Mammary epithelial cell (primary cell): ENCODE measurements at regions of chr3 and their contacts with region 1.

Region 1: GRCh38 chr3:13479581-13480339 is at the start of gene HDAC11:
- DNase-seq: peak; percentile 94
- H3K4me3 ChIP-seq: peak within 1 kb of the TSS; percentile 59 to 77 (median 63)
- H3K27ac ChIP-seq: peak within 1 kb of the TSS; percentile 72
- H3K4me1 ChIP-seq: peaks cover 24% of the 10 kb centered on the region
- H3K27me3 ChIP-seq: no peaks in the 10 kb centered on the region
- CTCF ChIP-seq: no peak
- total RNA-seq, gene HDAC11: 17.2 to 17.7 TPM

Region 2: GRCh38 chr3:13301286-13301987 is 178.3 kb before region 1 on chr3:
- CTCF ChIA-PET with region 1: no interaction called
- dilution Hi-C with region 1: no loop called
- in situ Hi-C with region 1: no loop called
- intact Hi-C with region 1: no loop called
- DNase-seq: peak; percentile 64
- H3K4me3 ChIP-seq: no peak overlapping the region
- H3K27ac ChIP-seq: no peak overlapping the region
- H3K4me1 ChIP-seq: peaks cover 8% of the 10 kb centered on the region
- H3K27me3 ChIP-seq: no peaks in the 10 kb centered on the region
- CTCF ChIP-seq: no peak

Region 3: DNA sequence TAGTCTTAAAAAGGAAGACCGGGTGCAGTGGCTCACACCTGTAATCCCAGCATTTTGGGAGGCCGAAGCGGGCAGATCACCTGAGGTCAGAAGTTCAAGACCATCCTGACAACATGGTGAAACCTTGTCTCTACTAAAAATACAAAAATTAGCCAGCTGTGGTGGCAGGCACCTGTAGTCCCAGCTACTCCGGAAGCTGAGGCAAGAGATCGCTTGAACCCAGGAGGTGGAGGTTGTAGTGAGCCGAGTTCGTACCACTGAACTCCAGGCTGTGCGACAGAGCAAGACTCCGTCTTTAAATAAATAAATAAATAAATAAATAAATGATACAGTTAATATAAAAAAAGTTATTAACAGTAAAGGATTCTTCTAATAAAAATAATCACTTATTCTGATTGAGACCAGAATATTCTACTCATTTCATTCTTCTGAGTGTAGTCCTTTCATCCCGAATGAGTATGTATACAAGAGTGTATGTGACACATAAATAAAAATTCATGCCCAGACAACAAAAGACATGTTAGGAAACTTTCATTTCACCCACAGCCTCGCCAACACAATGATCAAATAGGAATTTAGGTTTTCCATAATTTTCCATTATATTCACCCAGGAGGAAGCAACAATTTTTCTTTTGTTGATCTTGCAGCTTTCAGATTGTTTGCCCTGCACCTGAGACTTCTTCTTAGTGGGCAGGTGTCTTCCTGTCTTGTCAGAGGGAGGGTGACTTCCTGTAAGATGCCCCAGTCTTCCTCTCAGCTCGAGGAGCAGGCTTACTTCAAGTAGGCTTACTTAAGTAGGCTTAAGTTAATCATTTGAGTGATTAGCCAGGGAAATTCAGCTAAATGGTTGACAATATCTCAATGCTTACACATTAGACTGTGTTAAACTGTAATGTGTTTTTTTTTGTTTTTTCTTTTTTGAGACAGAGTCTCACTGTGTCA is 51.8 kb before region 1 on chr3:
- CTCF ChIA-PET with region 1: no interaction called
- dilution Hi-C with region 1: no loop called
- in situ Hi-C with region 1: no loop called
- intact Hi-C with region 1: no loop called
- DNase-seq: no peak
- H3K4me3 ChIP-seq: no peak overlapping the region
- H3K27ac ChIP-seq: no peak overlapping the region
- H3K4me1 ChIP-seq: no peaks in the 10 kb centered on the region
- H3K27me3 ChIP-seq: no peaks in the 10 kb centered on the region
- CTCF ChIP-seq: no peak

Region 4: DNA sequence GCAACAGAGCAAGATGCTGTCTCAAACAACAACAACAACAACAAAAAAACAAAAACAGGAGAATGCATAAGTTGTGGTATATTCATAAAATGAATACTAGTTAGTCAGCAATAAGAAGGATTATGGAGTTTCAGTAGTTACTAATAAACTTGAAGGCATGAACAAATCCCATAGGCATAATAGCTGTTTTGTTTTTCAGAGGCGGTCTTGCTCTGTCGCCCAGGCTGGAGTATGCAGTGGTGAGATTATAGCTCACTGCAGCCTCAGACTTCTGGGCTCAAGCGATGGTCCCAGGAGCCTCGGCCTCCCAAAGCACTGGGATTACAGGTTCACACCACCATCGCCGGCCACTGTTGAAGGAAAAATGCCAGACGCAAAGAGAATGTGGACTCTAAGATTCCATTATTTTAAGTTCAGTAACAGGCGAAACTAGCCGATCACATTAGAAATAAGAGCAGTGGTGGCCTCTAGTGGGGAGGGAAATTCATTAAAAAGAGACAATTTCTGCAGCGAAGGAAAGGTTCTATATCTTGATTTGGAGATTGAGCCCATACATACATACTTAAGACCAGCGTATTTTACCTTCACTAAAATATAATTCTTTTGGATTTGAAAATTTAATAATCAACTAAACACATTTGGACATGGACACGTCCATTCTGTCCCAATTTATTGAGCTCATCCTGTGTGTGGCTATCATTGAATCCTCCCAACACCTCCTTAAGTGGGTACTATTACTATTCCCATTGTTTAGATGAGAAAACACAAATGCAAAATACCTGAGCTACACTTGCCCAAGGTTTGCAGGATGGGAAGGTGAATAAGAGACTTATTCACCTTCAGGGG is 27.0 kb before region 1 on chr3:
- CTCF ChIA-PET with region 1: interaction called, 16 read pairs
- dilution Hi-C with region 1: no loop called
- in situ Hi-C with region 1: no loop called
- intact Hi-C with region 1: no loop called
- DNase-seq: peak; percentile 38
- H3K4me3 ChIP-seq: no peak overlapping the region
- H3K27ac ChIP-seq: peak overlapping the region; percentile 72
- H3K4me1 ChIP-seq: peaks cover 10% of the 10 kb centered on the region
- H3K27me3 ChIP-seq: no peaks in the 10 kb centered on the region
- CTCF ChIP-seq: peak; percentile 63 to 70

Region 5: GRCh38 chr3:13532126-13532525 is 52.4 kb after region 1 on chr3:
- CTCF ChIA-PET with region 1: no interaction called
- dilution Hi-C with region 1: loop called (anchors 5 kb)
- in situ Hi-C with region 1: no loop called
- intact Hi-C with region 1: no loop called
- DNase-seq: no peak
- H3K4me3 ChIP-seq: no peak overlapping the region
- H3K27ac ChIP-seq: no peak overlapping the region
- H3K4me1 ChIP-seq: peaks cover 18% of the 10 kb centered on the region
- H3K27me3 ChIP-seq: no peaks in the 10 kb centered on the region
- CTCF ChIP-seq: no peak

Region 6: GRCh38 chr3:13831386-13831996 is 351.7 kb after region 1 on chr3:
- CTCF ChIA-PET with region 1: interaction called, 16 read pairs
- dilution Hi-C with region 1: no loop called
- in situ Hi-C with region 1: no loop called
- intact Hi-C with region 1: no loop called
- DNase-seq: no peak
- H3K4me3 ChIP-seq: no peak overlapping the region
- H3K27ac ChIP-seq: no peak overlapping the region
- H3K4me1 ChIP-seq: peaks cover 5% of the 10 kb centered on the region
- H3K27me3 ChIP-seq: no peaks in the 10 kb centered on the region
- CTCF ChIP-seq: no peak